ENCODE measurements at regions of chr5 and their contacts with region 1.

Region 1: DNA sequence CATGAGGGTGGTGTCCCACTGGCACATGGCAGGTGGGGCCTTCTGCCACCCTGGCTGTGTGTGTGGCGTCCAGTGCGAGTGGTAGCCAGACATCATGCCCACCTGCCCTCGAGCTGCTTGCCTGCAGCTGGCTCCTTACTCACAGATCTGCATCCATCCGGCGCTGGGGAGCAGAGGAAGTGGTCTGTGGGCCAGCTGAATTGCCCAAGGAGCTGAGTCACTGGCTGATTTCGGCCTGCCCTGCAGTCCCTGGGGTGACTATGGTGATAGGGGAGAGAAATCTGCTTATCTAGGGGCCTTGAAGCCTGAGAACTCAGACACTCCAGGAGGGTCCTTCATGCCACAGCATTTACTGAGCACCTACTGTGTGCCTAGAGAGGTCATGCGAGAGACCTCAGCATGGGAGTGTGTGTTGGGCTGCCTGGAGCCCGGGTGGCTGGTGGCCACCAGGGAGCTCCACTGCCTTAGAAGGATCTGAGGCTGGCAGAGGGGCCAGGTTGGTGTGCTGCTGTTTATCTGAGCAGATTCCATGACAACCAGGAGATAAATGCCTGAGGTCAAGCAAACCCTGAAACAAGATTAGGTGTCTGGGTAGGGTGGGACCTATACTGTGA is 57.1 kb downstream of the SLC22A5 start:
- DNase-seq: peak; percentile 62
- H3K4me3 Mint-ChIP-seq: peak overlapping the region; percentile 67
- H3K27ac Mint-ChIP-seq: peak overlapping the region; percentile 96
- H3K4me1 Mint-ChIP-seq: peaks cover 94% of the 10 kb centered on the region
- H3K27me3 Mint-ChIP-seq: no peaks in the 10 kb centered on the region

Region 2: GRCh38 chr5:131706281-131706680 is 720.4 kb before region 1 on chr5:
- intact Hi-C with region 1: no loop called
- DNase-seq: no peak
- H3K4me3 Mint-ChIP-seq: no peak overlapping the region
- H3K27ac Mint-ChIP-seq: no peak overlapping the region
- H3K4me1 Mint-ChIP-seq: peaks cover 3% of the 10 kb centered on the region
- H3K27me3 Mint-ChIP-seq: no peaks in the 10 kb centered on the region

Region 3: DNA sequence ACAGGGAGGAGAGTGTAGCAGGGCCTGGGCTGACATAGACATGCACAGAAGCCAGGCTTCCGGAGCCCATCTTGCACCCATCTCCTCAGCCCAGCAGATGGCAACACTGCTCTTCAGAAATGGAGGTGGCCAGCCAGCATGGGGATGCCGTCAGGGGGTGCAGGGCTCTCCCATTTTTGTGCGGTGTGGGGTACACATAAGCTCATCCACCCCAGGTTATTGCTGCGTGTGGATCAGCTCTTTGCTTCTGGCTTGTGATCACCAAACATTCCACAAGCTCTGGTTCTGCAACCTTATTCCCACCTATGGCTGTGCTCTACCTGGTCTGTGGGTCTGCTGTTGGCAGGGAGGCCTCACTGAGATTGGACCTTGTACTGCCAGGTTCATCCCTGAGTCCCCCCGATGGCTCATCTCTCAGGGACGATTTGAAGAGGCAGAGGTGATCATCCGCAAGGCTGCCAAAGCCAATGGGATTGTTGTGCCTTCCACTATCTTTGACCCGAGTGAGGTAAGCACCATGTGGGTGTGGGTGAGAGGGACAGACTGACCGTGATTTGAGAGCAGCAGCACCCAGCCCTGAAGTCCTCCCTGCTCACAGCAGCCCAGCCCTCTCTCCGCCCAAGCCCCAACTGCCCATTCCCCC is 39.9 kb before region 1 on chr5:
- intact Hi-C with region 1: loop called (anchors 5 kb)
- DNase-seq: peak; percentile 73
- H3K4me3 Mint-ChIP-seq: no peak overlapping the region
- H3K27ac Mint-ChIP-seq: peak overlapping the region; percentile 24
- H3K4me1 Mint-ChIP-seq: peaks cover 42% of the 10 kb centered on the region
- H3K27me3 Mint-ChIP-seq: no peaks in the 10 kb centered on the region

Region 4: GRCh38 chr5:132437604-132438266 is 11.1 kb after region 1 on chr5:
- intact Hi-C with region 1: loop called (anchors 1 kb)
- DNase-seq: no peak
- H3K4me3 Mint-ChIP-seq: peak overlapping the region; percentile 17
- H3K27ac Mint-ChIP-seq: peak overlapping the region; percentile 78
- H3K4me1 Mint-ChIP-seq: peaks cover 74% of the 10 kb centered on the region
- H3K27me3 Mint-ChIP-seq: no peaks in the 10 kb centered on the region

Region 5: DNA sequence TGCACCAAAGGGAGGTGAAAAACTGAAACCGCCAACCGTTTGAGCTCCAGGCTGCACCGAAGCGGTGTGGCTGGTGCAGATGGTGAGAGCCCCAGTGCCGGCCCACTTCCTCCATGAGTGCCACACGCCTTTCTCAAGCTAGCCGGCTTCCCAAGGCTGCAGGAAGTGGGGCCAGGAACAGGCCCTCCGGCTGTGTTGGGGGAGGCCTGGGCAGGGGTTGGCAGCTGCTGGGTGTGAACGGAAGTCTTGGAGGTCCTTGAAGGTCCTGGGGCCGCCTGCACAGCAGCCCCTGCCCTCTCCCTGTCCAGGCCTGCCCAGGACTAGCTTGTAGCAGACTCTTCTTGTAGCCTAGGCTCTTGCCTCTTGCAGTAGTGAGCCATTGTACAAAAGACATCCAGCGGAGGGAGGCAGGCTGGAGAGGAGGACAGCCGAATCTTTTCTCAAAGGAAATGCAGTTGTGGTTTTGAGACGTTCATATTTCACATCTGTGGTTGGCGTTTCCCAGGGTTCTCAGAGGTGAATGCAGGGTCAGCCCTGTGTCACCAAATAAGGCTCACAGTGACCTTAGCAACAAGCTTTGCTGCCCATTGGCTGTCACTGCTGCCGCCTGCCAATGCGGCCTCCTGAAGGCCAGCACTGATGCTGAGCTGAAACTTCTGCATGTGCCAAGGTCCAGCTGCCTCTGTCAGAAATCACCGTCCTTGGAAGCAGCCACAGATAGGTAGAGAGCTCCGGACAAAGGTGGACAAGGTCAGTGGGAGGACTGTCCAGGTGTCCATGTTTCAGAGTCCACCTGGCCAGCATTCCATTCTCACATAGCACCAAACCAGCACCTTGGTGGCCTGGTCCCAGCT is 40.0 kb after region 1 on chr5:
- intact Hi-C with region 1: loop called (anchors 1 kb)
- DNase-seq: peak; percentile 77
- H3K4me3 Mint-ChIP-seq: peak overlapping the region; percentile 58
- H3K27ac Mint-ChIP-seq: peak overlapping the region; percentile 82
- H3K4me1 Mint-ChIP-seq: peaks cover 83% of the 10 kb centered on the region
- H3K27me3 Mint-ChIP-seq: no peaks in the 10 kb centered on the region

Region 6: GRCh38 chr5:132662925-132663770 is 236.5 kb after region 1 on chr5:
- intact Hi-C with region 1: no loop called
- DNase-seq: no peak
- H3K4me3 Mint-ChIP-seq: no peak overlapping the region
- H3K27ac Mint-ChIP-seq: peak overlapping the region; percentile 92
- H3K4me1 Mint-ChIP-seq: peaks cover 74% of the 10 kb centered on the region
- H3K27me3 Mint-ChIP-seq: no peaks in the 10 kb centered on the region

Region 7: DNA sequence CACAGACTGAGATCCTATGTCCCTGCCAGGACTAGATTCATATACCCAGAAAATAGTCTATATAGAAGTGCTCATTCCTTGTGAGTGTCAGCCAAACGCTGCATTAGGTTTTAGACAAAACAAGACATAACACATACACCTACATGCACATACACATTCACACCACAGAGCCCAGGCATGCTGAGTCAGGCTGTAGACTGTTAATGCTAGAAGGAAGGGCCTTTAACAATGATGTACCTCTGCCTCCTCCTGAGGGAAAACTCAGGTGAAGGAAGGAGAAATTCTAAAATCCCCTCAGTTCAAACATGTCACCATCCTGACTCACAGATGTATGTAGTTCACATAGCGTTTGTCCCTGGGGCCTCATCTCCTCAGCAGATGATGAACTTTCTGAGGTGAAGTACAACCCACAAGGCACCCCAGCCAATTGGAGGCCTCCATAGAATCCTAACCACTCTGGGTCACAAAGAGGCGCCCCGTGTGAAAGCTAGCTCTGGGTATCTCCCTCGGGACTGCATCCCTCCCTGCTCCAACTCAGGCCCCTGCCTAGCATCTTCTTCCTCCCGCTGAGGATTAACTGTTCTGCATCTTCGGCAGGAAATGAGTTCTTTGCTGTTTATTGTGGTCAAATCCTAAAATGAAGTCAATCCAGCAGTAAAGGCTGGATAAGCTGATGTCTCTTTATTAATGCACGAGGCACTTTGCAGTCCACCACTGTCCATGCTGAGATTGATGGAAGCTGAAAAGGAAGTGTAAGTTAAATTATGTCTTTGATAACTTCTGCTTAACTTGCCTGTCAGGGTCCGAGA is 1226.5 kb after region 1 on chr5:
- intact Hi-C with region 1: no loop called
- DNase-seq: no peak
- H3K4me3 Mint-ChIP-seq: no peak overlapping the region
- H3K27ac Mint-ChIP-seq: no peak overlapping the region
- H3K4me1 Mint-ChIP-seq: no peaks in the 10 kb centered on the region
- H3K27me3 Mint-ChIP-seq: peaks cover 16% of the 10 kb centered on the region

Measured in activated T-helper 2 cell treated with anti-CD3 and anti-CD28 coated beads, Interferon-gamma antibody, Interleukin-2, Interleukin-4, amounts not matched to agents 10 μg/mL and 5 μg/mL and 100 μg/mL, durations not matched to agents 14 hours and 24 hours and 36 hours (primary cell).